Motor neuron (in vitro differentiated cells): ENCODE measurements at regions of chr20 and their contacts with region 1.

Region 1: GRCh38 chr20:38229376-38230252 is 30.9 kb downstream of the KIAA1755 start:
- ATAC-seq: peak in 1 of 8 experiments; percentile 63
- H3K4me3 ChIP-seq: no peak overlapping the region
- H3K27ac ChIP-seq: no peak overlapping the region
- H3K4me1 ChIP-seq: no peaks in the 10 kb centered on the region

Region 2: DNA sequence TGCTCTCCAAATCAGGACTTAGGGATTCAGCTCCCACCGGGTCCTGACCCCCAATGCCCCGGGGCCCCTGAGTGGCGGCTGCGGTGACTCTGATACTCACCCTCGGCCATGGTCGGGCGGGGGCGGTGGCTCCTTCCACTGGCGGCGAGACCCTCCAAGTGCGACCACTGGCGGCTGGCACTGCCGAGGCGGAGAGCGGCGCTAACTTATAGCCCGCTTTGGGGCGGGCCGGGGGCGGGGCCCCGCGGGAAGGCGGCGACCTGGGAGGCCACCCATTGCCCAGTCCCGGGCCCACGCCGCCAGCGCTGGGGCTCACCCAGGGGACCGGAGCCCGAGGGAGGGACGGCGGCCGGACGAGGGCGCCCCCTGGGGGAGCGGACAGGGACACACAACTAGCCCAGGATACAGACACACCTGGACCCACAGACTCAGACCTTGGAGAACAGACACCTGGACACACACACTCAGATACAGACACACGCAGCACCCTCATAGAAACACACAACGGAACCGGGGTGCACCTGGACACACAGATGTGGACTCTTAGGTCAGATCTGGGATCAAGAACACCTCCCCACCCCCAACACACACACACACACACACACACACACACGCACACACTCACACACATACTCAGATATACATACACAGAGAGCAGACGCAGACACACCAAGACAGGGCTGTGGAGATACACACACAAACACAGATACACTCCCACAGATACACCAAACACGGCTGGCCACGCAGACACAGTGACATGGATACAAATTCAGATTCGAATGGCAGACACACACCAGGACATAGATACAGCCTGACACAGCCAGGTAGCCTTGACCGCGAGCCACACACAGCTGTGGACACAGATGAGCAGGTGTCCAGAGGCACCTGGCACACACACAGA is 64.3 kb before region 1 on chr20 and contains the start of gene TGM2:
- in situ Hi-C with region 1: no loop called
- ATAC-seq: peak; percentile 93 to 98 (median 95)
- H3K4me3 ChIP-seq: peak within 1 kb of the TSS in 4 of 5 donors; percentile 10 to 31 (median 20)
- H3K27ac ChIP-seq: no peak within 1 kb of the TSS
- H3K4me1 ChIP-seq: no peaks in the 10 kb centered on the region
- total RNA-seq, gene TGM2: 0.05 to 7.1 (median 0.68) TPM

Region 3: DNA sequence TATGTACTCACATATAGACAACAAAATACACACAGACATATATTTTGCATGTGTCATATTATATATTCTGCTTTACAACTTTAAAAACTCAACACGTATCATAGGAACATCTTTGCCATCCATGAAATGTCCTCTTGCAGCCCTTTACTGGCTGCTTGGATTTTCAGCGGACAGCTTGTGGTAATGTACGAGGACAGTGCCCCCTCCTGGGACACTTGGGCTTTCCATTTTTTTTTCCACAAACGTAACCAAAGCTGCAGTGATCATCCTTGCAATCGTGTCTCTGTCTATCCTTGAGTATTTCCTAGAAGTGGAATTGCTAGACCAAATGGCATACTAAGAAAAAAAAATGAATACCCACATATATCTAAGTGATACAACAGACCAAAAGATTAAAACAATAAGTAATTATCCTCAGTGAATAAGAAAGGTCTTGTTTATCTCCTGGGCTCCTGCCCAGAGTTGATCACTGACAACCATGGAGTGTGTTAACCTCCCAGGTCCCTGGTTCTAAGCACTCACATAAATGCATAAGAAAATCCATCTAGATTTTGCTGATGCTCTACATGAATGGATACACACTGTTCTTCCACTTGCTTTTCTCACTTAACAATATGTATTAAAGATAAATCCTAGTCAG is 92.5 kb after region 1 on chr20:
- in situ Hi-C with region 1: loop called in 1 of 9 experiments (anchors 10 kb)
- ATAC-seq: peak; percentile 38 to 73 (median 68)
- H3K4me3 ChIP-seq: no peak overlapping the region
- H3K27ac ChIP-seq: no peak overlapping the region
- H3K4me1 ChIP-seq: no peaks in the 10 kb centered on the region

Region 4: GRCh38 chr20:38393259-38393658 is 163.6 kb after region 1 on chr20:
- in situ Hi-C with region 1: no loop called
- ATAC-seq: no peak
- H3K4me3 ChIP-seq: no peak overlapping the region
- H3K27ac ChIP-seq: no peak overlapping the region
- H3K4me1 ChIP-seq: no peaks in the 10 kb centered on the region